AG04449 (cell line): ENCODE measurements at regions of chr7 and their contacts with region 1.

Region 1: DNA sequence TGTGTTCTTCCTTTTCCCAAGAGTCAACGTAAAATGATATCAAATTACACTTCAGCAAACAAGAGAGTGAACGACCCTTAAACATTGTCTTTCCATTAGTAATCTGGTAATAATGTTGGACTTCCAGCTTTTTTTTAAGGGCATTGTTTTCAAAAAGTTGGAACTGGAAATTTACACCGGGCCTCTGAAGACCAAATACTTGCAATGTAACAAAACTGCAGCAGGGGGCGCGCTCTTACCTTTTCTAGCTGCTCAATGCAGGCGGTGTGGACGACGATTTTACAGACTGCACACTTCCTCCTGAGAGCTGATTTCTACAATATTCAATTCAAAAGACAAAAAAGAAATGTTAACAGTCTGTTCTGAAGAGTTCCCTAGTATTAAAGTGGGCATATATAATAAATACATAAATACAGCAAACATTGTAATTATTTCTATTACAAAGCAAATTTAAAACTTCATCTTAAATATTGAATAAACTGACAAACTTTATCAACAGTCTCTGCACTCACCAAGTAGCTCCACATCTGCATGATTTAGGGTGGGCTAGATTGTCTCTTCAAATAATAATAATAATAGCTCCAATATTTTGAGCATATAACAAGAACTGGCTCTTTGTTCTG is 190.4 kb downstream of the DGKI start:
- DNase-seq: no peak
- H3K4me3 ChIP-seq: no peak overlapping the region
- CTCF ChIP-seq: peak; percentile 83

Region 2: DNA sequence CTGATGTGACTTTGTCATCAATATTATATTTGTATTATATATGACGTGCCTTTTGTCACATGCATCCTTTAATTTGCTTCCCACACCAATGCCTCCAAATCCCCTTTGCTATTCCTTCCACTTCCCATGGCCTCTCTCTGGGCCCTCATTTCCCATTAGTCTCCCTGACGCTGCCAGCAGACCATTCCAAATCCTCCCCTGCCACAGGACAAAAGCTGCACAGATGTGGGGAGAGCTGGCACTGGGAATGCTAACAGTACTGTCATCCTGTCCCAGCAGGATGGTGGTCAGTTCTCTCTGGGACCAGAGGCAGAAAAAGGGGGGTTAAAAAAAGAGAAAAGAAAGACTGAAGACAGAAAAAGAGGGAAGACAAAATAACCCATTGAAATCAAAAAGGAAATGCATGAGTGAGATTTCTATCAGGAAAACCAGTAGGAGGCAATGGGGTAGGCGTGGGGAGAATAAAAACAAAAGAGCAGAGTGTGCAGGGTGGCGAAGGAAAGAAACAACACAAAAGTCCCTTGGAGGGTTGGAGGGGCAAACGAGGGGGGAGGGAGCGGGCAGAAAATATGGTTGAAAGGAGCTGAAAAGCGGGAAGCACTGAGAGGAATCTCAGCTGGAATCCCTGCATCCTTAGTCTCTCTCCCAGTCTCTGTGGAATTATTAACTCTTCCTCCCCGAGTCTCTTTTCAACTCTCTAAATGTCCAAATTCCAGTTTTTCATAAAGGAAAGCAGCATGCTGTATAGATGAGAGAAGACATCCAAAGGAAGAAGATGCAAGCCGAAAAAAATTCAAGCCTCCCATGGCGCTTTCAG is 253.6 kb before region 1 on chr7:
- CTCF ChIA-PET with region 1: no interaction called
- POLR2A ChIA-PET with region 1: no interaction called
- DNase-seq: no peak
- H3K4me3 ChIP-seq: no peak overlapping the region
- CTCF ChIP-seq: no peak

Region 3: GRCh38 chr7:137670199-137671071 is 14.1 kb after region 1 on chr7:
- CTCF ChIA-PET with region 1: interaction called, 125 read pairs
- POLR2A ChIA-PET with region 1: no interaction called
- DNase-seq: no peak
- H3K4me3 ChIP-seq: no peak overlapping the region
- CTCF ChIP-seq: no peak

Region 4: DNA sequence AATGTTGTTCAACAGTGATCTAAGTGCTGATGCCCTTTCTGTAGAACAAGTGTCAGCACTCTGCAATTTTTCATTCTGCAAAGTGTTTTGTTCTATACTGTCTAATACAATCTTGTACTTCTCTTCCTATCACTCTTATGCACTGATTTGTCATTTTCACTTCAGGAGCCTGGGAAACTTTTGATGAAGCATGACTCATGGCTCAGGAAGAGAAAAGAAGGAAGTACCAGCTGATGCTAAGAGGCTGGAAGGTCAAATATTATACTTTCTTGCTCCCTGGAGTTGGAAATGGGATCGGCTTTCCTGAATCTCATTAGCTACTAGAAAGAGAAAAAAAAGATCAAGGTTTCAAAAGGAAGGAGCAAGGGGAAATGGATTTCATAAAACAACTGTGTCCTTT is 144.7 kb after region 1 on chr7:
- CTCF ChIA-PET with region 1: interaction called, 13 read pairs
- POLR2A ChIA-PET with region 1: no interaction called
- DNase-seq: no peak
- H3K4me3 ChIP-seq: no peak overlapping the region
- CTCF ChIP-seq: no peak

Region 5: GRCh38 chr7:137846827-137847567 is 190.7 kb after region 1 on chr7 and contains the start of gene DGKI:
- CTCF ChIA-PET with region 1: interaction called, 13 read pairs
- POLR2A ChIA-PET with region 1: no interaction called
- DNase-seq: no peak
- H3K4me3 ChIP-seq: peak within 1 kb of the TSS; percentile 58
- CTCF ChIP-seq: no peak

Region 6: DNA sequence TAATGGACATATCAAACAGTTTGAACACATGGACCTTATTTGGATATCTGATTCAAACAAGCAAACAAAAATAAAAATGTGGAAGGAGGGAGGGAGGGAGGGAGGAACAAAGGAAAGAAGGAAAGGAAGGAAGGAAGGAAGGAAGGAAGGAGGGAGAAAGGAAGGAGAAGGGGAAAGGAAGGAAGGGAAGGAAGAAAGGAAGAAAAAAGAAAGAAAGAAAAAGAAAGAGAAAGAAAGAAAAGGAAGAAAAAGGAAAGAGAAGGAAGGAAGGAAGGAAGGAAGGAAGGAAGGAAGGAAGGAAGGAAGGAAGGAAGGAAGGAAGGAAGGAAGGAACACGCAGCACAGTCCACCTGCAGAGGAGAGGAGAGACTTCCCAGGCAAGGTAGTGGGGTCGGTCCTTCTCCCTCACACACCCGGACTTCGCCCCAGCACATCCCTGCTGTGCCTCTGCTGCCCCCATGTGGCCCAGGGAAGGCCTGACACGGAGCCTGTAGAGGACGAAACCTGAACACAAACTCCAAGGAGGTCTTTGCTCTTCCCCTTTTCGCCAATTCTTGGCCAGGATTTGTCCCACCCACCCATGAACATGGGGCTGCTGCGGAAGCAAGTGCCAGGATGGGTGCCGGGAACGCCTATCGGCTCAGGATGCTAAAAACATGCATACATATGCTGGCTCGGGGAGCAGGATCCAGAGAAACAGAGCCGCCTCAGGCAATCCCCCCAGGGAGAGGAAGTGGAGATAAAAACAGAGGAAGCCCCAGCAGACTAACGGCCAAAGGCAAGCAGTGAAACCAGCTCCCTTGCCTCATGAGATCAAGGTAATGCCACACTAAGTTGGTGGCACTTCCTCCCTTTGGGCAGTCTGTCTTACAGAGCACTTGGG is 242.7 kb after region 1 on chr7:
- CTCF ChIA-PET with region 1: interaction called, 185 read pairs
- POLR2A ChIA-PET with region 1: no interaction called
- DNase-seq: no peak
- H3K4me3 ChIP-seq: no peak overlapping the region
- CTCF ChIP-seq: peak; percentile 98